ENCODE measurements at regions of chr17 and their contacts with region 1.

Region 1: GRCh38 chr17:28661635-28662537 is at the starts of genes SDF2 and SUPT6H:
- DNase-seq: peak; percentile 97
- H3K4me3 Mint-ChIP-seq: peak within 1 kb of the TSS; percentile 98
- H3K27ac Mint-ChIP-seq: peak within 1 kb of the TSS; percentile 100
- H3K4me1 Mint-ChIP-seq: peaks cover 53% of the 10 kb centered on the region
- H3K27me3 Mint-ChIP-seq: no peaks in the 10 kb centered on the region
- total RNA-seq, gene SDF2: 30.3 to 30.9 TPM
- total RNA-seq, gene SUPT6H: 50.8 to 52.1 TPM

Region 2: DNA sequence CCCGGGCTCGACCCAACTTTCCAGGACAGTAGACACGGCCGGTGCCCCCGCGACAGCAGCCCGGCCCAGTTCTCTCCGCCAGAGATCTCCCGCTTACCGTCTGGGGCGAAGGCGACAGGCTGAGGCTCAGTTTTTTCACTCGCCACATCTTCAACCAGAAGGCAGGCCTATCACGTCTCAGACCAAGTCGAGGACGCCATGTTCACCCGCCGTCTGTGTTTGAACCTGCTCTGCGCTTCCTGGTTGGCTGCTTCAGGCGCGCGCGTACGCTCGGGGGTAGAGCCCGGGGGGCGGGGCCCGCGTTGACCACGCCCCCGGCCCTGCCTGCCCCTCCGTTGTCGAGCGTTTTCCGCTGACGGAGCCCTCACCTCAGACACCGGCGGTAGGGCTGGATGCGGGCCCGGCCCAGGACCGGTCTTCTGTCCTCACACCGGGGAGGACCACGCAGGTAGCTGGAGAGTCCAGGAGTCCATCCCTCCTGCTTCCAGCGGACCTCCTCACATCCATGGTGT is 63.0 kb before region 1 on chr17 and contains the start of gene SPAG5:
- CTCF ChIA-PET with region 1: no interaction called
- intact Hi-C with region 1: loop called (anchors 1 kb)
- DNase-seq: peak; percentile 96
- H3K4me3 Mint-ChIP-seq: peak within 1 kb of the TSS; percentile 95
- H3K27ac Mint-ChIP-seq: peak within 1 kb of the TSS; percentile 94
- H3K4me1 Mint-ChIP-seq: peaks cover 15% of the 10 kb centered on the region
- H3K27me3 Mint-ChIP-seq: no peaks in the 10 kb centered on the region
- total RNA-seq, gene SPAG5: 210 to 216 TPM

Region 3: GRCh38 chr17:28710861-28711722 is 49.2 kb after region 1 on chr17:
- CTCF ChIA-PET with region 1: no interaction called
- intact Hi-C with region 1: loop called (anchors 1 kb)
- DNase-seq: peak; percentile 92
- H3K4me3 Mint-ChIP-seq: peak overlapping the region; percentile 79
- H3K27ac Mint-ChIP-seq: peak overlapping the region; percentile 79
- H3K4me1 Mint-ChIP-seq: peaks cover 17% of the 10 kb centered on the region
- H3K27me3 Mint-ChIP-seq: peaks cover 16% of the 10 kb centered on the region

Region 4: DNA sequence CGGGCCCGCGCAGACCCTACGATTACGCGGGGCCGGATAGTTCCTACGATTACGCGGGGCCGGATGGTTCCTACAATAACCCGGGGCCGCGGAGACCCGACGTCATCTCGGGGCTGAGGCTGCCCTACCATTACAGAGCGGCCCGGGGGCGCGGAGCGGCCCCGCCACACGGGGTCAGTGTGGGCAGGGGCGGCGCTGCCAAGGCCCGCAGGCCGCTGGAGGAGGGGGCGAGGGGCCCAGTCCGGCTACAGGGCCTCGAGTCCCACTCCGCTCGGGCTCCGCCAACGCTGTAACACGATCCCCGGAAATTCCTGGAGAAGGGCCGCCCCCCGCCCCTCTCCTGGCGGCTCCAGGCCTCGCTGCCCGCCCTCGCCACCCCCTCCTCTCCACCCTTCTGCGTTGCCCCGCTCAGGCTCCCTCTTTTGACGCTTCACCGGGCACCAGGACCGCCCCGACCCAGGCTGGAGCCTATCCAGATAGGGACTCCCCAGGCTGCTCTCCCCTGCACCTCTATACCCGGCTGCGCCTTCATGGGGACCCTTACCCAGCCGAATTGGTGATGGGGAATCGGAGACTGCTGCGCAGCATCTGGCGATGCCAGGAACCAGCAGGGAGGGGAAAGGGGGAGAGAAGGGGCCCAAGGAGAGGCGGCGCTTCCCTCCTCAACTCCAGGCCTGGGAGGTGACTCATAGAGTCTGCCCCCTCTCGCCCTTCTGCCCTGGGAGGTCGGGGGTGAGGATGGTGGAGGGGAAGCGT is 55.9 kb after region 1 on chr17 and contains the start of gene RAB34:
- CTCF ChIA-PET with region 1: interaction called, 3 read pairs
- intact Hi-C with region 1: loop called (anchors 2 kb)
- DNase-seq: peak; percentile 22
- H3K4me3 Mint-ChIP-seq: peak within 1 kb of the TSS; percentile 66
- H3K27ac Mint-ChIP-seq: peak within 1 kb of the TSS; percentile 59
- H3K4me1 Mint-ChIP-seq: peaks cover 33% of the 10 kb centered on the region
- H3K27me3 Mint-ChIP-seq: peaks cover 25% of the 10 kb centered on the region
- total RNA-seq, gene RAB34: 10.2 to 12.3 TPM

Measured in activated naive CD4-positive, alpha-beta T cell treated with anti-CD3 and anti-CD28 coated beads for 36 hours (primary cell).